H1 (cell line): ENCODE measurements at regions of chr12 and their contacts with region 1.

Region 1: GRCh38 chr12:49503674-49504180 is 35.1 kb upstream of the KCNH3 start:
- DNase-seq: no peak
- H3K4me3 ChIP-seq: no peak overlapping the region
- H3K27ac ChIP-seq: no peak overlapping the region
- H3K4me1 ChIP-seq: no peaks in the 10 kb centered on the region
- H3K27me3 ChIP-seq: no peaks in the 10 kb centered on the region
- CTCF ChIP-seq: no peak
- EP300 ChIP-seq: no peak
- POLR2A ChIP-seq: no peak
- RAD21 ChIP-seq: no peak

Region 2: GRCh38 chr12:49366652-49367380 is 136.9 kb before region 1 on chr12:
- CTCF ChIA-PET with region 1: interaction called, 538 read pairs
- POLR2A ChIA-PET with region 1: interaction called, 5 read pairs
- DNase-seq: peak; percentile 86 to 94
- H3K4me3 ChIP-seq: peak overlapping the region; percentile 80 to 95 (median 86)
- H3K27ac ChIP-seq: peak overlapping the region; percentile 90
- H3K4me1 ChIP-seq: peaks cover 0 to 8% (median 2%) of the 10 kb centered on the region in 4 experiments; a peak in 3 of 7 replicates
- H3K27me3 ChIP-seq: peaks cover 0 to 3% (median 0%) of the 10 kb centered on the region in 4 experiments; a peak in 3 of 7 replicates
- CTCF ChIP-seq: peak in 2 of 3 experiments; percentile 2 to 15; a peak in 2 of 4 replicates
- EP300 ChIP-seq: no peak
- POLR2A ChIP-seq: peak; percentile 70 to 91
- RAD21 ChIP-seq: 0 out of 4 replicates have a peak, but pooled peaks of 1 of the 2 experiments have one; percentile 5

Region 3: GRCh38 chr12:49428793-49429192 is 74.9 kb before region 1 on chr12:
- CTCF ChIA-PET with region 1: no interaction called
- POLR2A ChIA-PET with region 1: no interaction called
- DNase-seq: no peak
- H3K4me3 ChIP-seq: no peak overlapping the region
- H3K27ac ChIP-seq: no peak overlapping the region
- H3K4me1 ChIP-seq: peaks cover 0 to 2% (median 0%) of the 10 kb centered on the region in 4 experiments; a peak in 1 of 7 replicates
- H3K27me3 ChIP-seq: no peaks in the 10 kb centered on the region
- CTCF ChIP-seq: no peak
- EP300 ChIP-seq: no peak
- POLR2A ChIP-seq: no peak
- RAD21 ChIP-seq: no peak